Activated CD8-positive, alpha-beta memory T cell treated with anti-CD3 and anti-CD28 coated beads, Interleukin-2, amount 10 ng/mL, durations not matched to agents 7 days and 5 days (primary cell): ENCODE measurements at regions of chr1 and their contacts with region 1.

Region 1: DNA sequence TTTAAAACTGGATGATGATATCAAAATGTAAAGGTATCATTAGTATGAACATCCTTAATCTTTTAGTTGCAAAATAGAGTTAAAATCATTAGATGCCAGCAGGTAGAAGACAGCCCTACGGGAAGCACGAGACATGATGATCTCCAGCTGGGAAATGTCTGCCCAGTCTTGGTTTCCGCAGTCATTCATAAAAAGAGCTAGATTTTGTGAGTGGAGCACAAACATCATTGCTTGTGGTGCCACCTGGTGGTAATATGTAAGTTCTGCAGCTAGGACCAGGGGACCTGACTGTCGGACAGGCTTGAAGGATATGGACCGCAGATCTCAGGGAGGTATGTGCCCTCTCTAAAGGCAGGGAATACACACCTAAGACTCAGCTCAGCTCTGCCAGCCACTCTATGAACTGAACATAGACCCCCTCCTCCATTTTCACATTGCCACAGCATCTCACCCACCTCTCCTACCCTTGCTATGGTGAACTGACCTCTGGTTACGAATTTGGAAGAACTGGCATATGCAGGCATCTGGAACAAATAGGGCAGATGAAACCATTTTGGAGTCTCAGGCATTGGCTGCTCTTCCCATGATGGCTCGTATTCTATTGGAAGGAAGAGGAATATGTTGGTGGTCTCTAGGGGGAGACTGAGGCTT is 9.2 kb downstream of the FCMR start:
- DNase-seq: peak; percentile 79
- ATAC-seq: peak; percentile 53
- H3K4me3 Mint-ChIP-seq: no peak overlapping the region
- H3K27ac Mint-ChIP-seq: no peak overlapping the region
- H3K4me1 Mint-ChIP-seq: peaks cover 40% of the 10 kb centered on the region
- H3K27me3 Mint-ChIP-seq: peaks cover 4% of the 10 kb centered on the region

Region 2: GRCh38 chr1:206635080-206635977 is 277.2 kb before region 1 on chr1 and contains the start of gene DYRK3:
- CTCF ChIA-PET with region 1: interaction called, 17 read pairs
- DNase-seq: peak; percentile 96
- ATAC-seq: peak; percentile 93
- H3K4me3 Mint-ChIP-seq: peak within 1 kb of the TSS; percentile 76
- H3K27ac Mint-ChIP-seq: peak within 1 kb of the TSS; percentile 91
- H3K4me1 Mint-ChIP-seq: peaks cover 33% of the 10 kb centered on the region
- H3K27me3 Mint-ChIP-seq: peaks cover 19% of the 10 kb centered on the region
- total RNA-seq, gene DYRK3: 9.5 to 12.7 TPM

Region 3: GRCh38 chr1:206766251-206766856 is 146.2 kb before region 1 on chr1:
- CTCF ChIA-PET with region 1: interaction called, 14 read pairs
- DNase-seq: peak; percentile 91
- ATAC-seq: peak; percentile 68
- H3K4me3 Mint-ChIP-seq: peak overlapping the region; percentile 13
- H3K27ac Mint-ChIP-seq: peak overlapping the region; percentile 80
- H3K4me1 Mint-ChIP-seq: peaks cover 64% of the 10 kb centered on the region
- H3K27me3 Mint-ChIP-seq: peaks cover 34% of the 10 kb centered on the region

Region 4: DNA sequence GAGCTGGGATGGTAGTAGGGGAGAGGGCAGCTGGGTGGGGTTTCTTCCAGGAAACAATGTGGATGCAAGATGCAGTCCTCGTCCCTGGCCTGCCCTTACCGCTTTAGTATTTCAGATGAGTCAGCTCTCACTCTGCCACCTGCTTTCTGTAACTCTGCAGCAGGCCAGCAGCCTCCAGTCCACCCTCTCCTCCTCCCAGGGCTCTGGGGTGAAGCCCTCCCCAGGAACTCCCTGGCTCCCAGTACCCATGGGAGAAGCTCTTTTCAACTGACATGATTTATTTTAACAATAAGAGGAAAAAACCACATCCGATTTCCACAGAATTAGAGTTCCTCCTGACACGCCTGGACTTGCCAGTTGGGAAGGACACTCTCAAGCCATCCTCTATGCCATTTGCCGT is 86.2 kb before region 1 on chr1:
- CTCF ChIA-PET with region 1: interaction called, 17 read pairs
- DNase-seq: peak; percentile 26
- ATAC-seq: no peak
- H3K4me3 Mint-ChIP-seq: no peak overlapping the region
- H3K27ac Mint-ChIP-seq: no peak overlapping the region
- H3K4me1 Mint-ChIP-seq: peaks cover 36% of the 10 kb centered on the region
- H3K27me3 Mint-ChIP-seq: no peaks in the 10 kb centered on the region

Region 5: DNA sequence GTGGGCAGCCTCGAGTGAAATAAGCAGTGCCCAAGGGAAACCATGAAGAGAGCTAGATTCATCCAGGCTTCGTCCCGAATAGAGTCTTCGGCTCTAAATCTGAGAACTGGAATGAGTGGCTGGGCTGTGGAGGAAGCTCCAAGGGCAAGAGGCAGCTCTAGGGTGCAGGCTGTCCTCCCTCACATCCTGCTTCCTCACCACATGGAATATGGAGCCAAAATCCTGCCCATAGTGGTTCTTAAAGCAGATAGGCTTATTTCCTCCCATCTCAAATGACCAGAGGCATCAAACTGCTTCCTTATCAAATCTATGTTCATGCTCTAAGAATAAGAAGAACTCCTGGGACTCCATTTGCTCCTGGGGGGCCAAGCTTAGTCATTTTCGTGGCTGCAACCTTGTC is 12.9 kb before region 1 on chr1:
- CTCF ChIA-PET with region 1: interaction called, 10 read pairs
- DNase-seq: peak; percentile 18
- ATAC-seq: no peak
- H3K4me3 Mint-ChIP-seq: no peak overlapping the region
- H3K27ac Mint-ChIP-seq: no peak overlapping the region
- H3K4me1 Mint-ChIP-seq: peaks cover 12% of the 10 kb centered on the region
- H3K27me3 Mint-ChIP-seq: peaks cover 2% of the 10 kb centered on the region

Region 6: GRCh38 chr1:206955476-206956451 is 43.2 kb after region 1 on chr1:
- CTCF ChIA-PET with region 1: interaction called, 11 read pairs
- DNase-seq: no peak
- ATAC-seq: no peak
- H3K4me3 Mint-ChIP-seq: no peak overlapping the region
- H3K27ac Mint-ChIP-seq: no peak overlapping the region
- H3K4me1 Mint-ChIP-seq: peaks cover 12% of the 10 kb centered on the region
- H3K27me3 Mint-ChIP-seq: peaks cover 7% of the 10 kb centered on the region